OCI-LY7 (cell line): ENCODE measurements at regions of chr3 and their contacts with region 1.

Region 1: DNA sequence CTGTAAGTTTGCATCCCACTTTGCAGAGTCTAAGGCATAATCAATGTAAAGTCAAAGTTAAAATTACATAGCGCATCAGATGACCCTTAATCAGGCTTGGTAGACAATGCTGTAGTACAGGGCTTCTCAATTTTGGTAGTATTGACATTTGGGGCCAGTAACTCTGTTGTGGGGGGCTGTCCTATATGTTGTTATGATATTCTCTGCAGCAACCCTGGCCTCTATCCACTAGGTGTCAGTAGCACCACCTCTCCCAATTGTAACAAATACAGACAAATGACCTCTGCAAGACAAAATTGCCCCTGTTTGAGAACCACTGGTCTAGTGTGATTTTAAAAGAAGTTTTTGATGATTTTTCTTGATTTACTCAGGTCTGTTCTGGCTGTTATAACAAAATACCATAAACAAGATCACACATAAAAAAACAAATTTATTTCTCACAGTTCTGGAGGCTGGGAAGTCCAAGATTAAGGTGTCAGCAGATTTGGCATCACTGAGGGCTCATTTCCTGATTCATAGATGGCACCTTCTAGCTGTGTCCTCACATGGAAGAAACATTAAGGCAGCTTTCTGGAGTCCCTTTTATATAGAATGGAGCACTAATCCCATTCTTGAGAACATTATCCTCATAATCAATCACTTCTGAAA is 37.6 kb upstream of the SLC9A9 start:
- DNase-seq: peak; percentile 55
- H3K4me3 ChIP-seq: no peak overlapping the region
- H3K27ac ChIP-seq: no peak overlapping the region
- H3K4me1 ChIP-seq: no peaks in the 10 kb centered on the region
- CTCF ChIP-seq: peak; percentile 91

Region 2: GRCh38 chr3:143951351-143951971 is 65.6 kb after region 1 on chr3:
- CTCF ChIA-PET with region 1: no interaction called
- POLR2A ChIA-PET with region 1: no interaction called
- intact Hi-C with region 1: loop called (anchors 2 kb)
- DNase-seq: peak; percentile 51
- H3K4me3 ChIP-seq: no peak overlapping the region
- H3K27ac ChIP-seq: no peak overlapping the region
- H3K4me1 ChIP-seq: no peaks in the 10 kb centered on the region
- CTCF ChIP-seq: peak; percentile 87

Region 3: GRCh38 chr3:144341471-144341870 is 455.6 kb after region 1 on chr3:
- CTCF ChIA-PET with region 1: no interaction called
- POLR2A ChIA-PET with region 1: no interaction called
- intact Hi-C with region 1: no loop called
- DNase-seq: no peak
- H3K4me3 ChIP-seq: no peak overlapping the region
- H3K27ac ChIP-seq: no peak overlapping the region
- H3K4me1 ChIP-seq: no peaks in the 10 kb centered on the region
- CTCF ChIP-seq: no peak